CD8-positive, alpha-beta memory T cell (primary cell): ENCODE measurements at regions of chr11 and their contacts with region 1.

Region 1: DNA sequence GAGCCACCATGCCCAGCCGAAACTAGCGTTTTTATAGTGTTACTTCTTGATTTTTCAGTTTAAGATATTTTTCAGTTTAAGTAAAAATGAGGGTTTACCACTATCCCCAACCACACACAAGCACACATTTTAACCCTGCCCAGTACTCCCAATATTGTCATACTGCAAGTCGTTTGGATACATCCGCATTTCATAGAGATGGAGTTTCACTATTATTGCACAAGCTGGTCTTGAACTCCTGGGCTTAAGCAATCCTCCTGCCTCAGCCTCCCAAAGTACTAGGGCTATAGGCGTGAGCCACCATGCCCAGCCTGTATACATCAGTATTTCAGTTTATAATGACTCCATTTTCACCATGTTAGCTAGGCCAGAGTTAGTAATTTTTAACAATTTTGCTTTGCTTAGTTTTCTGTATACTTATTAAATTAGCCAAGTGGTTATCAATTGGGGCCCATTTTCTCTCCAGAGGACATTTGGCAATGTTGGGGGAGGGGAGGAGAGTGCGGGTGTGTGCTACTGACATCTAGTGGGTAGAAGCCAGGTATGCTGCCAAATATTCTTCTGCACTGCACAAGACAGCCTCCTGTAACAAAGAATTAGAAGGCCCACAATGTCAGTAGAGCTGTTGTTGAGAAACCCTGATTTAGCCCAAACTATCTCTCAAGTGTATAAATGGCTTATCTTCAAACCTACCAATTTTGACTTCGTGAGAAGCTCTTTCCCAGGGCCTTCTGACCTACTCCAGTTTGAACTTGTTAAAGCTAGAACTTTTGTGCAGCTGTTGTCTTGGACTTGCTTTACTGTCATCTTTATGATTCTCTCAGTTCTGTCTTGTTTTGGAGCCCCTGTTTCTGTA is 7.3 kb downstream of the USP47 start:
- DNase-seq: peak; percentile 34 to 76 (median 60)
- H3K4me3 ChIP-seq: no peak overlapping the region
- H3K4me3 Mint-ChIP-seq: peak overlapping the region in 5 of 7 donors; percentile 7 to 59 (median 9)
- H3K27ac ChIP-seq: no peak overlapping the region
- H3K27ac Mint-ChIP-seq: peak overlapping the region in 7 of 8 donors; percentile 27 to 78 (median 63)
- H3K4me1 ChIP-seq: peaks cover 83% of the 10 kb centered on the region
- H3K4me1 Mint-ChIP-seq: peaks cover 53 to 57% (median 56%) of the 10 kb centered on the region in 3 donors
- H3K27me3 ChIP-seq: no peaks in the 10 kb centered on the region
- H3K27me3 Mint-ChIP-seq: no peaks in the 10 kb centered on the region

Region 2: GRCh38 chr11:11798586-11799438 is 50.3 kb before region 1 on chr11:
- CTCF ChIA-PET with region 1: interaction called, 20 read pairs
- POLR2A ChIA-PET with region 1: no interaction called
- DNase-seq: peak; percentile 58 to 83 (median 72)
- H3K4me3 ChIP-seq: no peak overlapping the region
- H3K4me3 Mint-ChIP-seq: no peak overlapping the region
- H3K27ac ChIP-seq: no peak overlapping the region
- H3K27ac Mint-ChIP-seq: no peak overlapping the region
- H3K4me1 ChIP-seq: peaks cover 3% of the 10 kb centered on the region
- H3K4me1 Mint-ChIP-seq: no peaks in the 10 kb centered on the region
- H3K27me3 ChIP-seq: no peaks in the 10 kb centered on the region
- H3K27me3 Mint-ChIP-seq: peaks cover 15 to 39% of the 10 kb centered on the region in 2 donors